BJ (cell line): ENCODE measurements at regions of chr3 and their contacts with region 1.

Region 1: DNA sequence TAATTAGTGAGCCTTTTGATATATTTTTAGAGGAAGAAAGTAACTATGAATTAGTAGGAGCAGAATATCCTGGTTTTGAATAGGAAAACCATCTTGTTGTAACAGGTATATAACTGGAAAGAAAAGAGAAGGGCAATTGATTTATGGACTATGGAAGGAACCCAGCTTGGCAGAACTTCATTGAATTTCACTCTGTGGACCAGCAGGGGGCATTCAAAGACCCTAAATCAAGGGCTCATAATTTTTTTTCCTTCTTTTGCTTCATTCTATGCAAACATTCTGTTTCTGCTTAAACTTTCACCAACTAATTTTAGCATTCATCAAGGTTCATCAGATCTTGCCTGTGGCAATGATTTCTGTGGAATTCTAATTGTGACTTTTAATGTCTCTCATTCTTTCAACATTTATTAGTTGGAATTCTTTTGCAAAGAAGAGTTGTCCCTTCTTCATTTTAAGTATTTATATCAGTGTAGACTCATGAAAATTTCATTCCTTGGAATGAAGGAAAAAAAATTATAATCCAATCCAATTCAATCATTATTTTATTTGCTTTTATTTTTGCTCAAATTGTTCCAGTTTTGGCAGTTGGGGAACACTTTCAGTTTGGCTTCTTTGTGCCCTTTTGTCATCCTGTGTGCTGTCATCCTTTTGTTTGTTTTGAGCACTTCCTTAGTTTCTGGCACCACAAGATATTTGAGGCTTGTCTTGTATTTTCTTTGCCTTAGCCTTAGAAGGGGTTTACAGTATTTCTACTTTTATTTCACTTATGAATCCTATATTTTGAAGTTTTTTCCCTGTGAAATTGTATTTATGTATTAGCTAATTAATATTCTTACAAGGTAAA is 30.4 kb downstream of the NXPE3 start:
- DNase-seq: no peak
- H3K4me3 ChIP-seq: no peak overlapping the region
- H3K27me3 ChIP-seq: no peaks in the 10 kb centered on the region
- CTCF ChIP-seq: peak; percentile 59

Region 2: GRCh38 chr3:101735833-101736232 is 73.6 kb before region 1 on chr3:
- CTCF ChIA-PET with region 1: no interaction called
- POLR2A ChIA-PET with region 1: no interaction called
- DNase-seq: no peak
- H3K4me3 ChIP-seq: no peak overlapping the region
- H3K27me3 ChIP-seq: no peaks in the 10 kb centered on the region
- CTCF ChIP-seq: no peak

Region 3: GRCh38 chr3:101849051-101849720 is 39.8 kb after region 1 on chr3 and contains the start of gene NFKBIZ:
- CTCF ChIA-PET with region 1: interaction called, 10 read pairs
- POLR2A ChIA-PET with region 1: interaction called, 5 read pairs
- DNase-seq: peak; percentile 66
- H3K4me3 ChIP-seq: peak within 1 kb of the TSS; percentile 67
- H3K27me3 ChIP-seq: no peaks in the 10 kb centered on the region
- CTCF ChIP-seq: no peak
- polyA plus RNA-seq, gene NFKBIZ: 41.6 and 50.1 TPM in 2 replicates

Region 4: DNA sequence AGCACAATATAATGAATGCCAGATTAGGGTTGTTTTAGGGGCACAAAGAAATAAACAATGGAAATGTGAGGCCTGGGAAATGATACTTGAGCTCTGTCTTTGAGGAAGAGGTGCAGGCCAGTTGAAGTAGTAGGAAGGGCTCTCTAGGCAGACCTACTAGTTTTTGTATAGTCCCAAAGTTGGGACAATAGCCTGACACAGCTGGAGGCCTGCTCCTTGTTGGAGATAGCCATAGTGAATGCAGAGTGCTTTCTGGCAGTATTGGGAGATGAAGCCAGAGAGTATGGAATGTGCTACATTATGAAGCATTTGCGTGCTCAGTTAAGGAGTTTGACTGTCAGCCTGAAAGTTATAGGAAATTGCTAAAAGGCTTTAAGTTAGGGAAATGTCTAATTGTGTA is 374.2 kb after region 1 on chr3:
- CTCF ChIA-PET with region 1: interaction called, 10 read pairs
- POLR2A ChIA-PET with region 1: no interaction called
- DNase-seq: no peak
- H3K4me3 ChIP-seq: no peak overlapping the region
- H3K27me3 ChIP-seq: no peaks in the 10 kb centered on the region
- CTCF ChIP-seq: no peak

Region 5: DNA sequence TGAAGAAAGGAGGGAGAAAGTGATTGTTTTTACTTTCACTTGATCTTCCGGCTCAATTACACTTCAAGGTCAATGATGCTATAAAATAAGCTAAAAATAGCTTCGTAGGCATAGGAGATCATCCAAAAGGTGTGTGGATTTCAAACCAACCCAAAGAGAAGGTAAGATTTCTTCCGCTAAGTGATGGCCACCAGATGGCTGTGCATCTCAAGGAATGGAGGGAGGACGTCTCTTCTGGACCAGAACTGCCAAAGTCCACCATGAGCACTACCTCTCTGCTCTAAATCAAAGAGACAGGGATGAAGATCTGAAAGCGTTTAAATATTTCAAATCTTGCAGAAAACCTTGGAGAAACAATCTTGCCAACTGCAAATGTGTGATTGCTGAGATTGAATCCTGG is 426.3 kb after region 1 on chr3:
- CTCF ChIA-PET with region 1: interaction called, 116 read pairs
- POLR2A ChIA-PET with region 1: no interaction called
- DNase-seq: no peak
- H3K4me3 ChIP-seq: no peak overlapping the region
- H3K27me3 ChIP-seq: peaks cover 2% of the 10 kb centered on the region; the same call in 1 of the 2 replicates
- CTCF ChIP-seq: peak; percentile 64